ENCODE measurements at regions of chr11 and their contacts with region 1.

Region 1: GRCh38 chr11:34495724-34496377 is 17.7 kb downstream of the ELF5 start:
- DNase-seq: no peak

Region 2: DNA sequence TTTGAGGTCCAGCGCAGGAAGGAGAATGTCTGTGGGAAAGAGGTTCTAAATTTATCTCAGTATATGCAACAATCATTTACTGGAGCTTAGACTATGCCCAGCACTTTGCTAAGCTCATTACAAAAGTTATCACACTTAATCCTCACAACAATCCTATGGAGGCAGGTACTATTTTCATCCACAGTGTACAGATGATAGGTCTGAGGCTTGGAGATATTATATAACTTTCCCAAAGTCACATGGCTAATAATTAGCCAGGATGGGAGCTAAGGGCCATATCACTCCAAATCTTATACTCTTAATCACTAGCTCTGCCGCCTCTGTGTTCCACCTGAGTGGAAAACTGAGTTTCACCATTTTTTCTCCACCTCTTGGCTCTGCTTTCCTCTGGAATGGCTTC is 491.6 kb before region 1 on chr11:
- intact Hi-C with region 1: loop called in 1 of 2 experiments (anchors 2 kb)
- DNase-seq: no peak

Region 3: DNA sequence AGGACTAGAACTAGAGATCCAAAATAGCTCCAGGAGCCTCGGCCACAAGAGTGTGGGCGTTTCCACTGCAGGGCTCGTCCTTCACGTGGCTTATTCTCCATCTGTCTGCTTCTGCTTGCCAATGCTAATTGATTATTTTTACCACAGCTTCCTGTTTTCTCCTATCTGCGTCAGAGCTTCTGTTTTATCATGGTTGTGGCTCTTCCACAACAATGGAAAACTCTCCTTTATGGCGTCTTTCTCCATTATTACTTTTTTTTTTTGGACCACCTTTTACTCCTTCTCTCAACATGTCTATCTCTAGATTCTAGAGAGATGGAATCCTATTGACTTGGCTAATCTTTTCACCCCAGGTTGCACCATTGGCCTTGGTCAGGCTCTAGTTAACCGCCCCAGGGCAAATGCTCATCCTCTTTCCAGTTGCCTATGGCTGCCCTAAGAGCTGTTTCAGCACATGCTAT is 31.2 kb before region 1 on chr11:
- intact Hi-C with region 1: no loop called
- DNase-seq: no peak

Measured in posterior vena cava (tissue), 2 donors.